Endothelial cell of umbilical vein (primary cell): ENCODE measurements at regions of chr11 and their contacts with region 1.

Region 1: GRCh38 chr11:111694851-111695250 is 71.3 kb downstream of the PPP2R1B start:
- DNase-seq: peak; percentile 26
- H3K4me3 ChIP-seq: no peak overlapping the region
- H3K27ac ChIP-seq: no peak overlapping the region
- H3K4me1 ChIP-seq: no peaks in the 10 kb centered on the region
- H3K27me3 ChIP-seq: no peaks in the 10 kb centered on the region
- CTCF ChIP-seq: no peak
- POLR2A ChIP-seq: no peak

Region 2: GRCh38 chr11:111684251-111684650 is 10.6 kb before region 1 on chr11:
- CTCF ChIA-PET with region 1: interaction called, 11 read pairs
- POLR2A ChIA-PET with region 1: no interaction called
- dilution Hi-C with region 1: no loop called
- intact Hi-C with region 1: no loop called
- DNase-seq: no peak
- H3K4me3 ChIP-seq: no peak overlapping the region
- H3K27ac ChIP-seq: no peak overlapping the region
- H3K4me1 ChIP-seq: no peaks in the 10 kb centered on the region
- H3K27me3 ChIP-seq: no peaks in the 10 kb centered on the region
- CTCF ChIP-seq: no peak
- POLR2A ChIP-seq: no peak

Region 3: GRCh38 chr11:111910676-111911562 is 216.1 kb after region 1 on chr11:
- CTCF ChIA-PET with region 1: no interaction called
- POLR2A ChIA-PET with region 1: no interaction called
- dilution Hi-C with region 1: no loop called
- intact Hi-C with region 1: no loop called
- DNase-seq: no peak
- H3K4me3 ChIP-seq: no peak overlapping the region
- H3K27ac ChIP-seq: no peak overlapping the region
- H3K4me1 ChIP-seq: peaks cover 6% of the 10 kb centered on the region
- H3K27me3 ChIP-seq: peaks cover 2 to 9% of the 10 kb centered on the region in 2 experiments
- CTCF ChIP-seq: no peak
- POLR2A ChIP-seq: no peak